ENCODE measurements at regions of chr22 and their contacts with region 1.

Region 1: DNA sequence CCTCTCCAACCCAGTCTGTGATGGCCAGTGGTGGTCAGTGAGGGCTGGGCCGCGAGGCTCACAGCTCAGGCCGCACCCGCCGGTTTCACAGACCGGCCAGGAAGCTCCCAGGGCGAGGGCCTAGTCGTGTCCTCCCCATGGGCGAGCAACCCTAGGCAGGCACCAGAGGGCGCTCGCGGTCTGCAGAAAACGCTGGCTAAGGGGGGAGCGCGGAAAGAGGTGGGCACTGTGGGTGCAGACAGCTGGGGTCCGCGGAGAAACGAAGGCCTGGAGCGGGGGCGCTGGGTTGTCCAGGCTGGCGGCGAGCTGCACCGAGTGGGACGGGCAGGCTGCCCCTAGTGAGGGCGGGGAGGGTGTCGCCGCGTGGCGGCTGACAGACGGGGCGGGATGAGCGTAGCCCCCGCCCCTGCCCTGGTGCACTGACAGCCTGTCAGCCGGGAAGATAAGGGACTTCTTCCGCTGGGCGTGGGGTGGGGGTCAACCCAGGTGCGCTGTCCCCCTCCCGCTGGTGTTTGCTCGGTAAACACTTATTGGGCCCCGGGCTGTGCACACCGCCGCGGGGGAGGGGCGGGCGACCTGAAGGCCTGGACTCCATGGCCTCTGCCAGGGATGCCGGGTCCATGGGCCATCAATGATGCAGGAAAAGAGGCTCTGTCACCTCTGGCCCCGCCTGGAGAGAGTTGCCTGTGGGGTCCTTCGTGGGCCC is 7.5 kb downstream of the GP1BB start:
- DNase-seq: no peak
- H3K4me3 ChIP-seq: peak overlapping the region; percentile 61
- CTCF ChIP-seq: peak; percentile 99

Region 2: DNA sequence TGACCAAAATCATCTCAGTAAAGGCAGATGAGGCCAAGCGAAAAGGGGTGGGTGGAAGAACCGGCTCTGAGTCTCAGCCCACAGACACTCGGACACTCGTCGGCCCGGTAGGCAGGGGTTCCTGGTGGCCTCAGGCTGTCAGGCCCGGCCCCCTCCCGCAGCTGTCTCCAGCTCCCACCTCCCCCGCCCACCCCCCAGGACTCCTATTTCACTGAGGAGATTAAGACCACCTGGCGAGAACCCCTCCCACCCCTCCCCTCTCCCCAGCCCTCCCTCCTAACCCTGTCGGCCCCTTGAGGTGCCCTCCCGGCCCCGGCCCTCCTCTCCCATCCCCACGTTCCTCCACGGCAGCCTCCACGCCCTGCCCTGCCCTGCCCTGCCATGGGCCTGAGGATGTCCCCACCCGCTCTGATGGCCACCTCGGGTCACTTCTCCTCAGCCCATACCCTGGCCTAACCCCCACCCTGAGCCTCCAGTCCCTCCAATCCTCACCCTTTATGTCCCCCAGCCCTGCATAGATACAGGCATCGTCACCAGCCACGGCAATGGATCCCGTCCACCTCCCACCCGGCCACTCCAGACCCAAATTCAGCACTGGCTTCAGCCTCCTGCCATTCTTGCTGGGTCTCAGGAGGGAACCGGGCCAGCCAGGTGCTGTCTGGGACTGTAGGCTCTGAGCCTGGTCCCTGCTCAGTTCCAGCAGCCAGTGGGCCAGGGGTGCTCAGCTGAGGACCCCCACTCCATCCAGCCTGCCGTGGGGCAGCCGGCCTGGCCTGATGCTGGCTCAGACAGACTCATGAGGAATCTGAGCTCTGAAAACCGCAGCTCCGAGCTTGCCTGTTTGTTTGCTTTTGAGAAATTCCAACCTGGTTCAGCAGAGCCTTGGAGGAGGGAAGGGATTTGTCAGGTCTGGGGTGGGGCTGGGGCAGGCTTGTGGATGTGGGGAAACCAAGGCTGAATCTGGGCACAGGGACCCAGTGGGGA is 20.0 kb after region 1 on chr22:
- CTCF ChIA-PET with region 1: interaction called, 70 read pairs
- POLR2A ChIA-PET with region 1: no interaction called
- DNase-seq: no peak
- H3K4me3 ChIP-seq: no peak overlapping the region
- CTCF ChIP-seq: no peak

Region 3: GRCh38 chr22:19874307-19875060 is 143.7 kb after region 1 on chr22:
- CTCF ChIA-PET with region 1: interaction called, 16 read pairs
- POLR2A ChIA-PET with region 1: no interaction called
- DNase-seq: no peak
- H3K4me3 ChIP-seq: no peak overlapping the region
- CTCF ChIP-seq: no peak

Region 4: GRCh38 chr22:19903031-19903430 is 172.2 kb after region 1 on chr22:
- CTCF ChIA-PET with region 1: interaction called, 125 read pairs
- POLR2A ChIA-PET with region 1: interaction called, 4 read pairs
- DNase-seq: no peak
- H3K4me3 ChIP-seq: no peak overlapping the region
- CTCF ChIP-seq: no peak

Region 5: GRCh38 chr22:19942157-19943081 is 211.6 kb after region 1 on chr22:
- CTCF ChIA-PET with region 1: interaction called, 11 read pairs
- POLR2A ChIA-PET with region 1: no interaction called
- DNase-seq: no peak
- H3K4me3 ChIP-seq: peak overlapping the region; percentile 82
- CTCF ChIP-seq: no peak